ENCODE measurements at regions of chr6 and their contacts with region 1.

Region 1: DNA sequence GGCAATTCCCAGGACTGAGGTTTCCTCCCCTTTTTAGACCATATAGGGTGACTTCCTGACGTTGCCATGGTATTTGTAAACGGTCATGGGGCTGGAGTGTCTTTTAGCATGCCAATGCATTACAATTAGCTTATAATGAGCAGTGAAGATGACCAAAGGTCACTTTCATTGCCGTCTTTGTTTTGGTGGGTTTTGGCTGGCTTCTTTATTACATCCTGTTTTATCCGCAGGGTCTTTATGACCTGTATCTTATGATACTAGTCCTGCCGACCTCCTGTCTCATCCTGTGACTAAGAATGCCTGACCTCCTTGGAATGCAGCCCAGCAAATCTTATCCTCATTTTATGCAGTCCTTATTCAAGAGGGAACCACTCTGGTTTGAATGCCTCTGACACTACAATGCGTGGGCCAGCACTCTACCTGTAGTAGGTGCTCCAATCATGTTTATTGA is 190.1 kb downstream of the KCNQ5 start:
- DNase-seq: no peak
- H3K4me3 Mint-ChIP-seq: no peak overlapping the region
- H3K27ac Mint-ChIP-seq: no peak overlapping the region
- H3K4me1 Mint-ChIP-seq: no peaks in the 10 kb centered on the region
- H3K27me3 Mint-ChIP-seq: no peaks in the 10 kb centered on the region

Region 2: DNA sequence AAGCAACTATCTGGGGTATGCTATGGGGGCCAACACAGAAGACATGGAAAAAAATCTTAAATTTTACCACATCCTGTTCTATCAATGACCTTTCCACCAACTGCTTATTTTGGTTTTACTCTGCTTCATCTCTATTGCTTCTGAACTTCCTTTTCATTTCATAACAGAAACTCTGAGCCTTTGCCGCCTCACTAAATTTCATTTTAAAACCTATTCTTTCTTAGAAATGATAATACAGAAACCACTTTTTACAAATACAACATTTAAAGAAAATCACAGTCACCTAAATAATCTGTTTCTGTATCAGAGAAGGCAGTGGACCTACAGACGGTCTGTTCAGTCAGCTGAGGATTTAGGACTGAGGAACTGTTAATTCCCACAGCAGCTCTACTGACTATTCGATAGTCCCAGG is 72.6 kb before region 1 on chr6:
- CTCF ChIA-PET with region 1: no interaction called
- POLR2A ChIA-PET with region 1: no interaction called
- intact Hi-C with region 1: loop called (anchors 5 kb)
- DNase-seq: no peak
- H3K4me3 Mint-ChIP-seq: no peak overlapping the region
- H3K27ac Mint-ChIP-seq: no peak overlapping the region
- H3K4me1 Mint-ChIP-seq: peaks cover 28% of the 10 kb centered on the region
- H3K27me3 Mint-ChIP-seq: no peaks in the 10 kb centered on the region

Region 3: DNA sequence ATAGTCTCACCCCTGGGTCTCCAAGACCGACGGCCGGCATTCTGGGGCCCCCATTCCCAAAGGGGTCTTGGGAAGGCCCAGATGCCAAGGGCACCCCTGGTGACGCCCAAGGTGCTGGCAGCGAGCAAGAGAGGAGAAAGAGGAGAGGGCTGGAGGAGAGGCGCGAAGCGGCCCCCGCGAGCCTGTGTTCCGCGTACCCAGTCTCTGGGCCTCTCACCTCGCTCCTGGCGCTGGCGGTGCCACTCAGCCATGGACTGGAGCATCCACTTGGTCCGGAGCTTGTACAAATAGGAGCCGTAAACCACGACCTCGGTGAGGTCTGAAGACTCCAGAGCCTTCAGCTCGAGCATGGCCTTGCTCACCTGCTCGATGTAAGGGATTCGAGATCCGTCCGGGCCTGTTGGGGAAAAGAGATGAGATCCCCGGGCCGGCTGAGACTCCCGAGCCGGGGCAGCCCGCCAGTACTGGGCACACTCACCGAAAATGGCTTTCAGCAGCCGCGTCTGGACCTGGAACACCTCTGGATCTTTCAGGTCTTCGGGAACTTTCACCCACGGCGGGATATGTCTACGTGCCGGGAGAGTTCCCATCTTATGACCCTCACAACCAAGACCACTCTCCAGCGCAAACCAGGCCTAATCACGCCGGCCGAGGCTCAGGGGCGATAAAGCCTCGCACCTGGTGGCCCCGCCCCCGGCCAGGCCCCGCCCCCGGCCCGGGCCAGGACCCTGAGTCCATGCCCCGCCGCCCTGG is 541.8 kb after region 1 on chr6 and contains the start of gene DPPA5:
- CTCF ChIA-PET with region 1: no interaction called
- POLR2A ChIA-PET with region 1: no interaction called
- intact Hi-C with region 1: no loop called
- DNase-seq: no peak
- H3K4me3 Mint-ChIP-seq: no peak within 1 kb of the TSS
- H3K27ac Mint-ChIP-seq: no peak within 1 kb of the TSS
- H3K4me1 Mint-ChIP-seq: no peaks in the 10 kb centered on the region
- H3K27me3 Mint-ChIP-seq: peaks cover 7% of the 10 kb centered on the region
- total RNA-seq, gene DPPA5: not detected